ENCODE measurements at regions of chr15 and their contacts with region 1.

Region 1: GRCh38 chr15:80776420-80777045 is 2.6 kb upstream of the CEMIP start:
- DNase-seq: peak; percentile 75

Region 2: GRCh38 chr15:80455668-80456442 is 320.7 kb before region 1 on chr15:
- CTCF ChIA-PET with region 1: interaction called, 21 read pairs
- POLR2A ChIA-PET with region 1: no interaction called
- DNase-seq: peak; percentile 79

Region 3: DNA sequence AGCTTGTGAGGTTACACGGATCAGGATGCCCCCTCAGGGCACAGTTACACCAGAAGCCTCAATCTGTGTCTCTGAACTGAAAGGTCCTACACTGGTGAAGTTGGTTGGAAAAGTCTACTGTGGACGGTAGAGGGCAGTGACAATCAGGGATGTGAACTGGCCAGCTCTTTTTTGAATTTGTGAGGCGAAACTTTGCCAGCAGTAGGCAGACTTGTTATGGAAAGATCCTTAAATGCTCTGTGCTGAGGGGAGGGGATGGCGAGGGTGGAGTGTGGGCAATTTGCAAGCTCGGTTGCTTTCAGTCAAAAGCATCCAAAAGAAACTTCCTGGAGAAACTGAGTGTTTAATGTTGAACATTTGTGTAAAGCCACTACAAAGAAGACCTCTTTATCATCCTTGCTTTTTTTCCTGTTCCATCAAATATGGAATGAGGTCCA is 208.8 kb before region 1 on chr15:
- CTCF ChIA-PET with region 1: interaction called, 37 read pairs
- POLR2A ChIA-PET with region 1: no interaction called
- DNase-seq: peak; percentile 75

Region 4: GRCh38 chr15:80660122-80660521 is 116.4 kb before region 1 on chr15:
- CTCF ChIA-PET with region 1: interaction called, 56 read pairs
- POLR2A ChIA-PET with region 1: interaction called, 3 read pairs
- DNase-seq: peak; percentile 73

Region 5: GRCh38 chr15:80727196-80727595 is 49.3 kb before region 1 on chr15:
- CTCF ChIA-PET with region 1: no interaction called
- POLR2A ChIA-PET with region 1: no interaction called
- DNase-seq: no peak

Region 6: GRCh38 chr15:80766275-80766674 is 10.3 kb before region 1 on chr15:
- CTCF ChIA-PET with region 1: interaction called, 16 read pairs
- POLR2A ChIA-PET with region 1: no interaction called
- DNase-seq: no peak

Region 7: GRCh38 chr15:80789296-80789695 is 12.8 kb after region 1 on chr15:
- CTCF ChIA-PET with region 1: interaction called, 14 read pairs
- POLR2A ChIA-PET with region 1: no interaction called
- DNase-seq: no peak

Region 8: DNA sequence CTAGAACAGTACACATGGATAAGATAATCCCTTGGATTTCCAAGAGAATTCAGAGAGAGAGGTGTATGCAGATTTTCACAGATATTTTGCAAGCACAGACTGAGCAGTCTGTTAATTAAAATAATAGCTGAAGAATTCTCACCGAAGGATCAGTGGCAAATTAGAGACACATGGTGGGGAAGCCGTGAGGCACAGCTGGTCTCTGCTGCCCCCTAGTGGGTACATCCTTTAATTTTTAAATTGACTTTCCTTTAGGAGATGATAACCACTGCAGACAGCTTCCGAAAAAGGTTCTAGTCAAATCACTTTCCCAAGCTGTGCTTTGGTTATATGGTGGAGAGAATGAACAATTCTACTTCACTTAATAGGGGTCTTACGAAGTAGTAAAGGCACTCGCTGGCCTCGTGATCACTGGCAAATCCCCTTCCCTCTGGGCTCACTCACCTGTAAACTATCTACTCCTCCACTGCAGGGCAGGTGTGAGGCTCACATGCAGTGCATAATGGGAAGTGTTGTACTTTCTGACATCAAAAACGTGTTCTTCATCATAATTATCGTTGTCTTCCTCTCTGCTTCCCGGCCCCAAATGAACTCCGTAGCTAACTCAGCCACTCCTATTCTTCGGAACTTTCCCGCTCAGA is 193.6 kb after region 1 on chr15:
- CTCF ChIA-PET with region 1: interaction called, 23 read pairs
- POLR2A ChIA-PET with region 1: no interaction called
- DNase-seq: peak; percentile 73

Region 9: DNA sequence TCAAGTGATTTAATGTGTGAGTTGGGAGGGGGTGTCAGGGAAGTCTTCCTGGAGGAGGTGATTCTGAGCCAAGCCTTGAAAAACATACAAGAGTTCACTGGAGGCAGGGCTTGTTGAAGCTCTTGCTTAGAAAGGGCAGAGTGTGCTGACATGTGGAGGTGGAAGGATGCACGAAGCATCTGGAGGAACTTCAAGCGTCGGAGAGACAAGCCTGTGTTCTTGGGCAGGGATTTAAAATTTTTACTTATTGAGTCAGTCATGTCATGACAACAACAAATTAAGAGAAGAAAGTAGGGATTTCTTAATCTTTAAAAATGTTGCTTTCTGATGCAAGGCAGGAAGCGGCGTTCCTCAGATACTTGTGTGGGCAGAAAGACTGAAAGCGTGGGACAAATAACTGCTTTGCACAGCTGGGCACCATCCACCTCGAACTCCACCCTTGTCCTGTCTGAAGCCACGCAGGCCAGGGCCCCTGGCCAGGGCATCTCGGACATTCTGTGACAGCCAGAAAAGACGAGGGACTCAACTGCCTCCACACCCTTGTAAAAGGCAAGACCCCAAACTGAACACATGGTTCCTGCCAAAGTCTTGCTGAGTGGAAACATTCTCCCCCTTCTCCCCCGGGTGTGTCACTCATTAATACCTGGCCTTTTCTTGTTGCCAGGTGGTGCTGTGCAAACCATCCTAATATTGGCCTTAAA is 413.2 kb after region 1 on chr15:
- CTCF ChIA-PET with region 1: no interaction called
- POLR2A ChIA-PET with region 1: no interaction called
- DNase-seq: no peak

Measured in HEK293T (cell line).